ENCODE measurements at regions of chr2 and their contacts with region 1.

Region 1: GRCh38 chr2:59171019-59171418 is 929.9 kb upstream of the FANCL start:
- DNase-seq: no peak
- H3K4me3 ChIP-seq: no peak overlapping the region
- H3K27ac ChIP-seq: no peak overlapping the region
- H3K4me1 ChIP-seq: no peaks in the 10 kb centered on the region; a peak in 1 of 7 replicates
- H3K27me3 ChIP-seq: no peaks in the 10 kb centered on the region
- CTCF ChIP-seq: no peak
- EP300 ChIP-seq: no peak
- POLR2A ChIP-seq: no peak
- RAD21 ChIP-seq: no peak

Region 2: GRCh38 chr2:58967736-58968135 is 203.3 kb before region 1 on chr2:
- CTCF ChIA-PET with region 1: no interaction called
- POLR2A ChIA-PET with region 1: no interaction called
- DNase-seq: no peak
- H3K4me3 ChIP-seq: no peak overlapping the region
- H3K27ac ChIP-seq: no peak overlapping the region
- H3K4me1 ChIP-seq: peaks cover 0 to 9% (median 3%) of the 10 kb centered on the region in 4 experiments; a peak in 2 of 7 replicates
- H3K27me3 ChIP-seq: no peaks in the 10 kb centered on the region
- CTCF ChIP-seq: no peak
- EP300 ChIP-seq: no peak
- POLR2A ChIP-seq: no peak
- RAD21 ChIP-seq: no peak

Region 3: GRCh38 chr2:59150217-59150849 is 20.7 kb before region 1 on chr2:
- CTCF ChIA-PET with region 1: no interaction called
- POLR2A ChIA-PET with region 1: no interaction called
- DNase-seq: no peak
- H3K4me3 ChIP-seq: no peak overlapping the region
- H3K27ac ChIP-seq: no peak overlapping the region
- H3K4me1 ChIP-seq: no peaks in the 10 kb centered on the region
- H3K27me3 ChIP-seq: peaks cover 0 to 2% (median 0%) of the 10 kb centered on the region in 4 experiments; a peak in 1 of 7 replicates
- CTCF ChIP-seq: no peak
- EP300 ChIP-seq: no peak
- POLR2A ChIP-seq: no peak
- RAD21 ChIP-seq: no peak

Region 4: DNA sequence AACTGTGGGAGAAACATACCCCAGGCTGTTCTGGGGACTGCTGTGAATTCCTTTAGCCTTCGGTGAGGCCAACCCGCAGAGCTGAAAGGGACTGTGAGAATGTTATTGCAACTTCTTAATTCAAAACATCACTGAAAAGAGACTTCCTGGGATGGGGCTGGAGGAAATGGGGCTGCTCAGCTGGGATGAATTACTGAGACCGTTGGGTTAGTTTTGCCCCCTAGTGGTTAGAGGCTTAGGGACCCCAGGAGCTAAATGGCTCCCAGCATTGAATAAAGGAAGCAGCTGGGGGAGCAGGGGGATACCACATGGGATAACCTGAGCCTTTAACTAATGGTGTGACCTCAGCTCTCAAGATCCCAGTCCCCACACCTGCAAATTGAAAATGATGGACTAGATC is 11.2 kb after region 1 on chr2:
- CTCF ChIA-PET with region 1: interaction called, 10 read pairs
- POLR2A ChIA-PET with region 1: no interaction called
- DNase-seq: peak; percentile 43 to 57
- H3K4me3 ChIP-seq: no peak overlapping the region
- H3K27ac ChIP-seq: no peak overlapping the region
- H3K4me1 ChIP-seq: peaks cover 0 to 3% (median 2%) of the 10 kb centered on the region in 4 experiments; a peak in 4 of 7 replicates
- H3K27me3 ChIP-seq: peaks cover 0 to 9% (median 3%) of the 10 kb centered on the region in 4 experiments; a peak in 4 of 7 replicates
- CTCF ChIP-seq: peak; percentile 62 to 77 (median 72)
- EP300 ChIP-seq: no peak
- POLR2A ChIP-seq: no peak
- RAD21 ChIP-seq: peak; percentile 78 to 82

Measured in H1 (cell line).